Right cardiac atrium (tissue), 5 donors: ENCODE measurements at regions of chr5 and their contacts with region 1.

Region 1: DNA sequence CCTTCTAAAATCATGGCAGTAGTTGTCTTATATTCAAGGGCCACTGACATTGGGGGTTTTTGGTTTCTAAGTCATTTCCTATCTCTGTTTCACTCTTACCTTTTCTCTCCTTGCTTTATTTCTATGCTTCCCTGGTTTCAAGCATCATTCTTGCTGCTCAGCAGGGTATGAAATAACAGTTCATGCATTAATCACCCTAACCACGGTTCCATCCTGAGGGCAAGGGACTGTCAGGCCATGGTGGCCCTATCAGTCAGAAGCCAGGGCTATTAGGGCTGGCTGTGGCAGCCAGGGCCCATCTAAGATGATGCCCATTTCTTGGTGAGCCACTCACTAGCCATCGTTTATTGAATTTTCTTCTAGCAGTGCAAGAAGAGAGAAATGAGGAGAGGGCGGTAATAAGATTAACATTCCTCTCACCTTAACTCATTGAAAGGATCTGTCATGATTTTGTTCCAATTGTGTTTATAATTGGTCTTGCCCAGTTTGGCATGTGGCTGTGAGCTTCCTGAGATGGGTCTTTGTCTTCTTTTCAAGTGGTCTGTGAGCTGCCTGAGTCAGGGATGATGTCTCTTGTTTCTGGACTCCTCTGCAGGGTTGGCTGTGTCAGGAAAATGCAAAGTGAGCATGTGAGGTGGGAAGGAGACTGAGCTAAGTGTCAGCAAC is 45.2 kb downstream of the CYSTM1 start:
- DNase-seq: no peak
- ATAC-seq: no peak
- H3K4me3 ChIP-seq: no peak overlapping the region
- H3K27ac ChIP-seq: peak overlapping the region; percentile 68
- H3K4me1 ChIP-seq: peaks cover 39% of the 10 kb centered on the region
- H3K27me3 ChIP-seq: no peaks in the 10 kb centered on the region

Region 2: DNA sequence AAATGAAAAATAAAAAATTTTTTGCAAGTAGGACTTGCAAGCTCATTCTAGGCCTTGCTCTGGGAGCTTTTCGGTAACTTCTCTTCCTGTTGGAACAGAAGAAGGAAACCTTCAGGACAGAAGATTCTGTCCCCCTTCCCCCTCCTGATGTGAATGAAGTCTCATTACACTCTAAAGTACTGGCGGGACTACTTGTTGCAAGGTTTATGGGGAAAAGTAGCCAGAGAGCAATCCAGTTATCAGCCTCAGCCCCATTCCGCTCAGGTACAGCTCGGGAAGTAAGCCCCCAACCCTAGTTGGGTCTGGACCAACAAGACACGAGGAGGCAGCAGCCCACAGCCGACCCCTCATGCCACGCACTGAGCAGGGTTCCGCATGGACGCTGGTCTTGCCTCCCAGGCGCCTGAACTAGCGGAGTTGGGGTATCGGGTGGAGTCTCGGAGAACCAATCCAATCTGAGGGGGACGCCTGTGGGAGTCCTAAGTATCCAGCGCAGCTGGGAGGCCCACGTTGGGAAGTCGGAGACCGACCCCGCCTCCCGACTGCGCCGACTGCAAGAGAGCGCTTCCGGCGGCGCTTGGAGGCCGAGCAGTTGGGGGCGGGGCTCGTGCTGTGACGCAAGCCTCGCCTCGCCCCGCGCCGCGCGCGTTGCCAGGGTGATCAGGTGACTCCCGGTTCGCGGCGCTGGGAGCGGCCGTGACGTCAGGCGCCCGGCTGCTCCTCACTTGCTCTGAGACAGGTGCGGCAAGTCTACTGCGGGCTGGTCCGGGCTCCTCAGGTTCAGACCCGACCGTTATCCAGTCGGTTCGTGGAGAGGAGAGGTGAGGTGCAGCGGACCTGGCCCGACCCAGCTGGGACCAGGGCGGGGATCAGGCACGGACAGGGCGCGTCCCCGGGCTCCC is 45.4 kb before region 1 on chr5 and contains the start of gene CYSTM1:
- intact Hi-C with region 1: loop called in 1 of 4 experiments (anchors 5 kb)
- DNase-seq: peak; percentile 97 to 99 (median 98)
- ATAC-seq: peak; percentile 95 to 96
- H3K4me3 ChIP-seq: peak within 1 kb of the TSS; percentile 67
- H3K27ac ChIP-seq: peak within 1 kb of the TSS; percentile 86
- H3K4me1 ChIP-seq: peaks cover 5% of the 10 kb centered on the region
- H3K27me3 ChIP-seq: no peaks in the 10 kb centered on the region
- total RNA-seq, gene CYSTM1: 47.8 to 58.3 (median 51.1) TPM

Region 3: DNA sequence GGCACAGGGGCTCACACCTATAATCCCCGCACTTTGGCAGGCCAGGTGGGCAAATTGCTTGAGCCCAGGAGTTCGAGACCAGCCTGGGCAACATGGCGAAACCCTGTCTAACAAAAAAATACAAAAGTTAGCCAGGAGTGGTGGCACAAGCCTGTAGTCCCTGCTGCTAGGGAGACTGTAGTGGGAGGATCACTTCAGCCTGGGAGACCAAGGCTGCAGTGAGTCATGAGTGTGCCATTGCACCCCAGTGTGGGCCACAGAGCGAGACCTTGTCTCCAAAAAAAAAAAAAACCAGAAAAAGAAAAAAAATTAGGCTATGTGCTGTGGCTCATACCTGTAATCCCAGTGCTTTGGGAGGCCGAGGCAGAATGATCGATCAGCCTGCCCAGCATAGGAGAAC is 268.7 kb after region 1 on chr5:
- intact Hi-C with region 1: no loop called
- DNase-seq: no peak
- ATAC-seq: no peak
- H3K4me3 ChIP-seq: no peak overlapping the region
- H3K27ac ChIP-seq: no peak overlapping the region
- H3K4me1 ChIP-seq: no peaks in the 10 kb centered on the region
- H3K27me3 ChIP-seq: no peaks in the 10 kb centered on the region